ENCODE measurements at regions of chr3 and their contacts with region 1.

Region 1: GRCh38 chr3:138694287-138695007 is 85.9 kb downstream of the FAIM start:
- DNase-seq: peak; percentile 99
- ATAC-seq: peak; percentile 96
- H3K4me3 ChIP-seq: no peak overlapping the region
- H3K27ac ChIP-seq: peak overlapping the region; percentile 61
- H3K4me1 ChIP-seq: peaks cover 4% of the 10 kb centered on the region
- H3K27me3 ChIP-seq: no peaks in the 10 kb centered on the region
- CTCF ChIP-seq: no peak
- POLR2A ChIP-seq: no peak
- RAD21 ChIP-seq: no peak

Region 2: GRCh38 chr3:138608322-138609135 is 85.9 kb before region 1 on chr3 and contains the start of gene FAIM:
- CTCF ChIA-PET with region 1: no interaction called
- POLR2A ChIA-PET with region 1: no interaction called
- dilution Hi-C with region 1: no loop called
- in situ Hi-C with region 1: no loop called
- intact Hi-C with region 1: loop called (anchors 5 kb)
- DNase-seq: peak; percentile 62
- ATAC-seq: peak; percentile 91
- H3K4me3 ChIP-seq: peak within 1 kb of the TSS; percentile 63
- H3K27ac ChIP-seq: peak within 1 kb of the TSS; percentile 79
- H3K4me1 ChIP-seq: peaks cover 5% of the 10 kb centered on the region
- H3K27me3 ChIP-seq: no peaks in the 10 kb centered on the region; the same call in 1 of the 2 replicates
- CTCF ChIP-seq: no peak
- POLR2A ChIP-seq: peak; percentile 51; the same call in 1 of the 2 replicates
- RAD21 ChIP-seq: no peak
- total RNA-seq, gene FAIM: 2.5 and 5.3 TPM in 2 replicates

Region 3: DNA sequence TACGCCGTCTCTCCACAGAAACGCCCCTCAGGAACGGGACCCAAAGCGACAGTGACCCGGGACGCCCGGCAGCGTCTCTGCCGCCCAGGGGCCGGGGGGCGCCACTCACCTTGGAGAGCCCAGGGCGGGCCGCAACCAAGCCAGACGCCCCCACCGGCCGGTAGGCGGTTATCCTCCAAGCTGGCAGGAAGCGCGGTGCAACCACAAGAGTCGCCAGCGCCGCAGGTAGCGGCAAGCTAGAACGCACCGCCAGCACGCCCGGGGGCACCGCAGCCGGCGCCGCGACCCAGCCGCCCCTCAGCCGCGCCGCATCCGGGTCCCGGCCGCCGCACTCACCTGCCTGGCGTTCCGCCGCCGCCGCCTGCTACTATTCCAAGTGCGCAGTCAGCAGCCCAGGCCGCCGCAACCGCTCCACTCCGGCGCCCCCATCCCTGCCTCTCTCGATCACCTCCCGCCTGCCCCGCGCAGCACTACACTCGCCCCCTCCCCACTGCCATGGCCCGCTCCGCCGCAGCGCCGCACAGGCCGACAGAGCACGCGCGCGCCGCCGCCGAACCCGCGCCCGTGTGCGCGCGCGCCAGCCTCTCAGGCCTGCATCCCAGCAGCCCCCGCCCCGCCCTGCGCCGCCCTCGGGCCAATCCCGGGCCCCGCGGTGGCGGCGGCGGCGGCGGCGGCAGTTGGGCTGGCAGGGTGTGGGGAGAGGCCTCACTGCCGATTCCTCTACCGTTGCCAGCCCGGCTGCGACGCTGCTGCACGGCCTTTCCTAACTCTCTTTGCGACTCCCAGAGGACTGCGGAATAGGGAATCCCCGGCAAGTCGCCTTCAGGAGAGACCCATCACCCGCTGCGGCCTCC is 140.1 kb after region 1 on chr3 and contains the start of gene PIK3CB:
- CTCF ChIA-PET with region 1: no interaction called
- POLR2A ChIA-PET with region 1: no interaction called
- dilution Hi-C with region 1: no loop called
- in situ Hi-C with region 1: no loop called
- intact Hi-C with region 1: loop called (anchors 10 kb)
- DNase-seq: peak; percentile 62
- ATAC-seq: peak; percentile 97
- H3K4me3 ChIP-seq: peak within 1 kb of the TSS; percentile 85
- H3K27ac ChIP-seq: peak within 1 kb of the TSS; percentile 83
- H3K4me1 ChIP-seq: peaks cover 1% of the 10 kb centered on the region; the same call in 1 of the 2 replicates
- H3K27me3 ChIP-seq: no peaks in the 10 kb centered on the region
- CTCF ChIP-seq: peak; percentile 15; the same call in 1 of the 2 replicates
- POLR2A ChIP-seq: peak; percentile 70
- RAD21 ChIP-seq: no peak
- total RNA-seq, gene PIK3CB: 6.3 and 7.5 TPM in 2 replicates

Region 4: DNA sequence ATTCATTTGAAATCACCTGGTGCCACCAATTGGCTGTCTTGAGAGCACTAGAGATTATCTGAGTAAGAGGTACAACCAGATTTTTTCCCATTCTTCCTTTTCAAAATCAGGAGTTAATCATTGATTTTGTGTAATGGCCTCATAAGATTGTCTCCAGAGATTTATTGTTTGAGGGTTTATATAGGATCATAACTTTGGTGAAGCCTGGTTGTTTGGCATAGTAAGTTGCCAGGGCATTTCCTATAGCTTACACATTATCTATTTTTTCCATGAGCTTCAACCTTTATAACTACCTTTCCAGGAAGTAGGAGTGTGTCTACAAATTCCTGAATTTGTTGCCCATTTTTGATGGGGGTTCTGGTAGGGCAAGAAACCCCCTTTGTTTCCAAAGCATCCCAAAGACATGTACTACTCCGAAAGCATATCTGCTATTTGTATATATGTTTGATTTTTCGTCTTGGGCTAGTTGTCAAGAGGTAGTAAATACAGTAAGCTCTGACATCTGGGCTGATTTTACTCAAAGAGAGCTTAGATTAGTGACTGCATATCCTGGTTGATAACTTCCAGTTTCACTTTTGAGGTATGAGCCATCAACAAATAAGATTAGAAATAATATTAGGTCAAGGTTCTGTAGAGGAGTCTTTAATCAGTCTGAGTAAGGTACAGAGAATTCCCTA is 338.0 kb after region 1 on chr3:
- CTCF ChIA-PET with region 1: no interaction called
- POLR2A ChIA-PET with region 1: no interaction called
- dilution Hi-C with region 1: no loop called
- in situ Hi-C with region 1: no loop called
- intact Hi-C with region 1: no loop called
- DNase-seq: no peak
- ATAC-seq: no peak
- H3K4me3 ChIP-seq: no peak overlapping the region
- H3K27ac ChIP-seq: no peak overlapping the region
- H3K4me1 ChIP-seq: no peaks in the 10 kb centered on the region
- H3K27me3 ChIP-seq: no peaks in the 10 kb centered on the region
- CTCF ChIP-seq: no peak
- POLR2A ChIP-seq: no peak
- RAD21 ChIP-seq: no peak